Ascending aorta (tissue), 2 donors: ENCODE measurements at regions of chrX and their contacts with region 1.

Region 1: DNA sequence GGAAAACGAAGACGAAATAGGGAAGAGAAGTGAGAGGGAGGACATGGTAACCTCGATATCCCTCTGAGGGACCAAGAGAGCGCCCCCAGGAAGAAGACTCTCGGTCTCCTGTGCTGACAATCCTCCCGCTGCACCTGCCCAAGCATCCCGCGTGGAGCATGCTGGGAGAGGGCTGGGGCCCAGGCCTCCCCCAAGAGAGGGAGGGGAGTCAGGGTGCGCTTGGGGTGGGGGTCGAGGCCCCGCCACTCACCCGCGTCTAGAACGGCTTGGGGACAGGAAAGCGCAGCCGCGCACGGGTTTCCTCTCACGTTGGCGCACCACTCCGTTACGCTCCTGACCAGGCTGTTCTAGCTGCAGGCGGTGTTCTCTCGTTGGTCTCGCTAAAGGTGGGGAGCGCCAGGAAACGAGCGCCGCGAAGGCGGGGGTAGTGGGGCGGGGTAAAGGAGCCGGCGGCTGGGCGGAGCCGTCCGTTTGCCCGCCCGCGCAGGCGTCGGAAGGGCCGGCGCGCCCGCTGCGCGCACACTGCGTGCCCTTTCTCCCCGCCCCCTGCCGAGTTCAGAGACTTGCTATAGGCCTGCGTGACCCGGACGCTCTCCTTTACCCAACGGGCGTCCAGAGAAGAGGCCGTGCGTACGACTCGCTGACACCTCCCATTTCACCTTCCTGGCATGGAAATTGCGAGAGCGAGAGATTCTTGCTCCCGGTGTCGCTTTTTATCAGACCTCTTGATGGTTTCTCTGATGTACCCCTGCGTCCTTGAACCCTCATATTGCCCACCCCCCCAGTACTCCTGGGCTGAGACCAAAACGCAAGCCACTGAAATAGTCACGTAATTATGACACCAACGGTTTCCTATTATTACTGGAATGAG is at the start of gene C1GALT1C1:
- DNase-seq: peak; percentile 72 to 93
- H3K4me3 ChIP-seq: peak within 1 kb of the TSS; percentile 62 to 73
- H3K27ac ChIP-seq: peak within 1 kb of the TSS; percentile 77 to 90
- H3K4me1 ChIP-seq: no peaks in the 10 kb centered on the region
- H3K27me3 ChIP-seq: no peaks in the 10 kb centered on the region
- CTCF ChIP-seq: no peak
- total RNA-seq, gene C1GALT1C1: 43.4 TPM

Region 2: DNA sequence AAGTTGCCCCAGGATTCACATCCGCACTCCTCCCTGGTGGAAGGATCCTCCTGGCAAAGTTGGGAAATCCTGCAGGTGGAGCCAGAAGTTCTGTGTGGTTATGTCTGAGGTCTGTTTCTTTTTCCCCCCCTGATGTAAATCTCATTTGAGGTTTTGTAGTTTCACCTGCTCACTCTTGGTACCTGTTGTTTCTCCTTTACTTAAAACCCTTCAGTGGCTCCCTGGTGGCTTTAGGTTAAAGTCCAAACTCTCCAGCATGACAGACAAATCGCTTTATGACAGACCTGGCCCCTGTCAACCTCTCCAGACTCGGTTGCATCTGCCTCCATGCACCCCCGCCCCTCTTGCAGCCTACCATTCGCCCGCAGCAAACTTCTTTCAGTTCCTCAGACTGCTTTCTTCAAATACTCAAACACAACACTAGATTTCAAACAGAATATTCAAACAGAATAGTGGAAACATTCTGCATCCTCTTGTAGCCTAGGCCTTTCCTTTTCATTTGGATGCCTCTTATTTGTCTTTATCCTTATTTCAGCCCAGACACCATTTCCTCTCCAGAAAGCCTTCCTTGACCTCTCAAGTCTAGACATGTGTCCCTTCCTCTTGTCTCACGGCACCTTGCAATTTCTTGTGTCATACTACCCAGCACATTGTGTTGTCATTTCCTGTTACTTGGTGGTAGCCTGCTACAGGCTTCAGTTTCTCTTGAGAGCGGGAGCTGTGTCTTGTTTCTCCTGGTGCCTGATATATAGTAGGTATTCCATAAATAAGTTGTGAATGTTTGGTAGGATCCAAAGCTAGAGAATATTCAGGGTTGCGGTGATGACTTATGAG is 1877.7 kb before region 1 on chrX:
- intact Hi-C with region 1: no loop called
- DNase-seq: no peak
- H3K4me3 ChIP-seq: no peak overlapping the region
- H3K27ac ChIP-seq: no peak overlapping the region
- H3K4me1 ChIP-seq: peaks cover 0 to 5% of the 10 kb centered on the region in 2 donors
- H3K27me3 ChIP-seq: no peaks in the 10 kb centered on the region
- CTCF ChIP-seq: no peak

Region 3: GRCh38 chrX:120485638-120486520 is 144.0 kb before region 1 on chrX:
- intact Hi-C with region 1: loop called (anchors 10 kb)
- DNase-seq: peak; percentile 17 to 83
- H3K4me3 ChIP-seq: peak overlapping the region; percentile 38 to 67
- H3K27ac ChIP-seq: peak overlapping the region; percentile 65 to 84
- H3K4me1 ChIP-seq: no peaks in the 10 kb centered on the region
- H3K27me3 ChIP-seq: no peaks in the 10 kb centered on the region
- CTCF ChIP-seq: peak in 2 of 3 experiments; percentile 28 to 56

Region 4: DNA sequence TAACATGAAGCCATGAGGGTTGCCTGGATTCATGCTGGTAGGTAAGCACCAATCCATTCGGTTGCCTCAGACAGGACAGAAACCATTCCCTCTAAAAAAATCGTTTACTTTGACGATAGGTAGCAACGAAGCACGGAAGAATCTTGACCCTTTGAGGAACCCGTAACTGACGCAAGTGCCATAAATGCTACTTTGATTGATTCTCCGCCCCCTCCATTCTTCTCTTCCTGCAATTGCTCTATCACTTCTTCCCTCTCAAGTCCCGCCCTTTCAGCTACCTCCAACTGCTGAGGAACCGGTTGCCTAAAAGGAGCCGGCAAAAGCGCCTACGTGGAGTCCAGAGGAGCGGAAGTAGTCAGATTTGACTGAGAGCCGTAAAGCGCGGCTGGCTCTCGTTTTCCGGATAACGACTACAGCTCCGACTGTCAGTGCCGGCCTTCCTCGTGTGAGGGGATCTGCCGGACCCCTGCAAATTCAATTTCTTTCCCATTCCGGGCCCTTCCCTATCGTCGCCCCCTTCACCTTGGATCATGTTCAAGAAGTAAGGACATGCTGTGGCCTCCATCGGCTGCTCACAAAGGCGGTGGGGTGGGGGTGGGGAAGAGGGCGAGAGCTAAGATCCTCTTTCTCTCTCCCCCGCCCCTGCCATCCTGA is 26.1 kb before region 1 on chrX and contains the start of gene MCTS1:
- intact Hi-C with region 1: loop called (anchors 1 kb)
- DNase-seq: peak; percentile 47 to 92
- H3K4me3 ChIP-seq: peak within 1 kb of the TSS; percentile 62 to 63
- H3K27ac ChIP-seq: peak within 1 kb of the TSS; percentile 75 to 89
- H3K4me1 ChIP-seq: no peaks in the 10 kb centered on the region
- H3K27me3 ChIP-seq: no peaks in the 10 kb centered on the region
- CTCF ChIP-seq: no peak
- total RNA-seq, gene MCTS1: not detected

Region 5: GRCh38 chrX:120672390-120672789 is 42.5 kb after region 1 on chrX:
- intact Hi-C with region 1: loop called (anchors 5 kb)
- DNase-seq: peak in 1 of 2 donors; percentile 72
- H3K4me3 ChIP-seq: no peak overlapping the region
- H3K27ac ChIP-seq: peak overlapping the region; percentile 80 to 82
- H3K4me1 ChIP-seq: peaks cover 0 to 2% of the 10 kb centered on the region in 2 donors
- H3K27me3 ChIP-seq: no peaks in the 10 kb centered on the region
- CTCF ChIP-seq: no peak